GM18951 (cell line): ENCODE measurements at regions of chr2 and their contacts with region 1.

Region 1: DNA sequence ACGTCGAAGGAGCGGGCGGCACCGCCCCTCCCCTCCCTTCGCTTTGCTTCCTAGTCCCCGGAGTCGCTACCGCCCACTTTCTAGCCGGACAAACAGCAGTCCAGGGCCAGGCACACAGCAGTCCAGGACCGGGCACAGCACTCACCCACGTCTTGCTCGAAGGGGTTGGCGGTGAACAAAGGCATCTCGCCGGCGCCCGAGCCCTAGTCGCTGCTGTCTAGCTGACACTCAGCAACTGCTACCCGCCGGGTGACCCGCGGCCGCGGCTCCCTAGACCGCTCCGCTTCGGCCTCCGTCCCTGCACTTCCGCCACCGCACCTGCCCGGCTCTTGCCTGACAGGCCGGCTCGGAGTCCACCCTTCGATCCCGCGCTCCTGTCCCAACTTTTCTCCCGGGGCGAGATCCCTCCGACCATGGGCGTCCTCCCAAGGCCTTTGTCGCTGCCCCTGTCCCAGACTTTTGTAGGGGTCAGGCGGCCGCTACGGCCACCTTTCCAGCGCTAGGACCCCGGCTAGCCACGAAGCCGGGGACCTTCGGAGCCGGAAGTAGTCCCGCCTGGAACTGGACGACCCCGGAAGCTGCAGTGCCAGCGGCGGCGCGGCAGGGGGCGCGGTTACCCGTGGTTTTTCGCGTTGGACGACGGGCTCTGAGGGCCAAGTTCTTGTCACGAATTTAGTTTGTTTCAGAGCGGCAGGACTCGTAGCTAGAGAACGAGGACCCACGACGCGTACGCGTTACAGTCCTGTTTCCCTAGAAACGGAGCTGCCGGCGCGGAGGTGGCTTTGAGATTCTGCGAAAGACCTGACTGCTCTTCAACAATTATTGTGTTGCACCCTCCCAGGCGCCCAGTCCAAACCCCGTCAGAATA is at the start of gene STAM2:
- POLR2A ChIP-seq: peak; percentile 91

Region 2: DNA sequence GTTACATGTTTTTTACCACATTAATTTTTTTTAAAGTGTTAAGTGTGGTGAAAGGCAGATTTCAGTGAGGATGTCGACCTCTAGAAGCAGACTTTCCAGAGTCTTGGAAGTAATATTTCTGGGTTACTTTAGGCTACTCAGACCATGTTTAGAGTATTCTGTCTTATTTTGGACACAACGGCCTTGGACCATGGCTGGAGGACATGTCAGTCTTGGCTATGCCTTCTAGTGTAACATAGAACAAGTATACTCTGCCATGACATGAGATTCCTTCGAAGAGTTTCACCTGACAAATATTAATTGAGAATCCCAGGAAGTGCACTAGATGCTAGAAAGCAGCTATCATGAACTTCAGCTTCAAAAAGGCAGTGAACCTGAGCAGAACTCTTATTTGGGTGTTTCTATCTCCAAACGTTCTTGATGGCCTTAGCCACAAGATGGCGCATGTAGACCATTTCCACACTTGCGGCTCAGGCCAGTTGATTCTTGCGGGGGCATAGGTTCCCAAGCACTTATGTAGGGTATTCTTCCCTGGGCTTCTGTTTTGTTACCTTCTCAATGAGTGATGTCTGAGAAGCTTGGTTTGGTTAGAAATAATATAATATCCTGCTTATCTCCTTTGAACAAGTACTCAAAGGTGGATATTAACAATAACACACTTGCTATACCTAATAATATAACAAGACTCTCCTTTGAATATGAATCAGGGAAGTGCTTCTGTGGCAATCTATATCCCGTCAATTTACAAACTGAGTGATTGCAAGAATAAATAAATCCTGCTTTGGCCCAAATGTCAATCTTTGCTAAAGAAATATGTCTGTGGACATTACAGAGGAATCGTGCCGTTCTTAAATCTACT is 138.9 kb before region 1 on chr2:
- in situ Hi-C with region 1: loop called (anchors 10 kb)
- POLR2A ChIP-seq: no peak